ENCODE measurements at regions of chr1 and their contacts with region 1.

Region 1: GRCh38 chr1:20786253-20787028 is 666 bp downstream of the HP1BP3 start:
- DNase-seq: peak; percentile 89 to 98 (median 95)
- ATAC-seq: peak; percentile 73
- H3K4me3 ChIP-seq: peak overlapping the region; percentile 86 to 95
- H3K4me3 Mint-ChIP-seq: peak overlapping the region; percentile 99
- H3K27ac ChIP-seq: peak overlapping the region; percentile 81 to 88
- H3K27ac Mint-ChIP-seq: peak overlapping the region; percentile 98
- H3K4me1 ChIP-seq: peaks cover 32% of the 10 kb centered on the region
- H3K4me1 Mint-ChIP-seq: peaks cover 38% of the 10 kb centered on the region
- H3K27me3 ChIP-seq: no peaks in the 10 kb centered on the region
- H3K27me3 Mint-ChIP-seq: no peaks in the 10 kb centered on the region
- CTCF ChIP-seq: no peak

Region 2: DNA sequence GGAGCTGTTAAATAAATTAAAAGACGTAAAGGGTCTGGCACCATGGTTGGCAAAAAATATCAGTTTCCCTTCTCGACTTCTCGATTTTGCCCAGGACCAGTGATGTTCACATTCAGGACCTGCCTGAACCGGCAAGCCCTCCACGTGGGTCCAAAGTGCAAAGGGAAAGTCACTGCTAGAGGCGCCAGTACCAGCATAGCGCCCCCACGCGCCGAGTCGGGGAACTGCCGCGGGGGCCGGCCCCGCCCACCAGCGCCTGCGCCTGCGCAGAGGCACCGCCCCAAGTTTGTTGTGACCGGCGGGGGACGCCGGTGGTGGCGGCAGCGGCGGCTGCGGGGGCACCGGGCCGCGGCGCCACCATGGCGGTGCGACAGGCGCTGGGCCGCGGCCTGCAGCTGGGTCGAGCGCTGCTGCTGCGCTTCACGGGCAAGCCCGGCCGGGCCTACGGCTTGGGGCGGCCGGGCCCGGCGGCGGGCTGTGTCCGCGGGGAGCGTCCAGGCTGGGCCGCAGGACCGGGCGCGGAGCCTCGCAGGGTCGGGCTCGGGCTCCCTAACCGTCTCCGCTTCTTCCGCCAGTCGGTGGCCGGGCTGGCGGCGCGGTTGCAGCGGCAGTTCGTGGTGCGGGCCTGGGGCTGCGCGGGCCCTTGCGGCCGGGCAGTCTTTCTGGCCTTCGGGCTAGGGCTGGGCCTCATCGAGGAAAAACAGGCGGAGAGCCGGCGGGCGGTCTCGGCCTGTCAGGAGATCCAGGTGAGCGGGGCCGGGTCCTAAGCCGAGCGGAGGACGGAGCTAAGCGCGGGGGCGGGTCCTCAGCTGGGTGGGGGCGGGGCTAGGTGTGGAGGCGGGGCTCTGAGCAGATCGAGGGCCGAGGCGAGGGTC is 153.0 kb before region 1 on chr1 and contains the start of gene PINK1:
- CTCF ChIA-PET with region 1: no interaction called
- POLR2A ChIA-PET with region 1: no interaction called
- intact Hi-C with region 1: loop called (anchors 1 to 2 kb)
- DNase-seq: peak; percentile 74 to 94 (median 87)
- ATAC-seq: peak; percentile 90
- H3K4me3 ChIP-seq: peak within 1 kb of the TSS; percentile 59 to 62
- H3K4me3 Mint-ChIP-seq: peak within 1 kb of the TSS; percentile 87
- H3K27ac ChIP-seq: peak within 1 kb of the TSS; percentile 46 to 55
- H3K27ac Mint-ChIP-seq: peak within 1 kb of the TSS; percentile 85
- H3K4me1 ChIP-seq: peaks cover 8% of the 10 kb centered on the region
- H3K4me1 Mint-ChIP-seq: peaks cover 9% of the 10 kb centered on the region
- H3K27me3 ChIP-seq: no peaks in the 10 kb centered on the region
- H3K27me3 Mint-ChIP-seq: no peaks in the 10 kb centered on the region
- CTCF ChIP-seq: peak; percentile 98
- total RNA-seq, gene PINK1: 8.0 to 8.3 TPM

Region 3: GRCh38 chr1:20732588-20733360 is 53.7 kb before region 1 on chr1 and contains the start of gene SH2D5:
- CTCF ChIA-PET with region 1: no interaction called
- POLR2A ChIA-PET with region 1: interaction called, 3 read pairs
- intact Hi-C with region 1: loop called (anchors 1 kb)
- DNase-seq: peak; percentile 39 to 86 (median 64)
- ATAC-seq: peak; percentile 65
- H3K4me3 ChIP-seq: peak within 1 kb of the TSS; percentile 60 to 67
- H3K4me3 Mint-ChIP-seq: peak within 1 kb of the TSS; percentile 79
- H3K27ac ChIP-seq: peak within 1 kb of the TSS in 1 of 2 experiments; percentile 4
- H3K27ac Mint-ChIP-seq: no peak within 1 kb of the TSS
- H3K4me1 ChIP-seq: peaks cover 21% of the 10 kb centered on the region
- H3K4me1 Mint-ChIP-seq: peaks cover 23% of the 10 kb centered on the region
- H3K27me3 ChIP-seq: peaks cover 0 to 5% of the 10 kb centered on the region in 2 experiments
- H3K27me3 Mint-ChIP-seq: peaks cover 21% of the 10 kb centered on the region
- CTCF ChIP-seq: peak; percentile 62
- total RNA-seq, gene SH2D5: not detected

Region 4: GRCh38 chr1:20751462-20751990 is 34.9 kb before region 1 on chr1:
- CTCF ChIA-PET with region 1: no interaction called
- POLR2A ChIA-PET with region 1: no interaction called
- intact Hi-C with region 1: no loop called
- DNase-seq: no peak
- ATAC-seq: no peak
- H3K4me3 ChIP-seq: no peak overlapping the region
- H3K4me3 Mint-ChIP-seq: no peak overlapping the region
- H3K27ac ChIP-seq: no peak overlapping the region
- H3K27ac Mint-ChIP-seq: no peak overlapping the region
- H3K4me1 ChIP-seq: no peaks in the 10 kb centered on the region
- H3K4me1 Mint-ChIP-seq: no peaks in the 10 kb centered on the region
- H3K27me3 ChIP-seq: no peaks in the 10 kb centered on the region
- H3K27me3 Mint-ChIP-seq: no peaks in the 10 kb centered on the region
- CTCF ChIP-seq: no peak

Region 5: DNA sequence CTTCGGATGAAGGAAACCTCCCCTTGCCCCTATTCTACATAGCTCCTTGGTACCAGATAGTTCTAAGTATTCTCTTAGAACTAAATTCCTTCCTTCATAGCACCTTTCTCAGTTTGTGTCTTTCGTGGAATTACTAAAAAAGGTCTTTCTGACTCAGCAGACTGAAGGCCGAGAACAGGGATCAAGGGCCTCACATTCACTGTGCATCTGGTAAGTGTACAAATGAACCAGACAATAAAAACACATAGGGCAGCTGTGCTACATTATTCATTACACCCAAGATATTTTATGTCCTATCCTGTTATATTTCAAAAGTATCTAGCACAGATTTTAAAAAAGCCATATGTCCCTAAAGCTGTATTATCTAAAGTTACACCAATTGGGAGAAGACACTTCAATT is 63.6 kb after region 1 on chr1:
- CTCF ChIA-PET with region 1: no interaction called
- POLR2A ChIA-PET with region 1: no interaction called
- intact Hi-C with region 1: no loop called
- DNase-seq: no peak
- ATAC-seq: no peak
- H3K4me3 ChIP-seq: no peak overlapping the region
- H3K4me3 Mint-ChIP-seq: no peak overlapping the region
- H3K27ac ChIP-seq: no peak overlapping the region
- H3K27ac Mint-ChIP-seq: no peak overlapping the region
- H3K4me1 ChIP-seq: no peaks in the 10 kb centered on the region
- H3K4me1 Mint-ChIP-seq: no peaks in the 10 kb centered on the region
- H3K27me3 ChIP-seq: no peaks in the 10 kb centered on the region
- H3K27me3 Mint-ChIP-seq: no peaks in the 10 kb centered on the region
- CTCF ChIP-seq: no peak

Region 6: GRCh38 chr1:21439721-21440629 is 653.5 kb after region 1 on chr1 and contains the start of gene NBPF3:
- CTCF ChIA-PET with region 1: no interaction called
- POLR2A ChIA-PET with region 1: no interaction called
- intact Hi-C with region 1: loop called in 1 of 2 experiments (anchors 5 kb)
- DNase-seq: peak; percentile 67 to 91 (median 86)
- ATAC-seq: peak; percentile 98
- H3K4me3 ChIP-seq: peak within 1 kb of the TSS; percentile 66 to 85
- H3K4me3 Mint-ChIP-seq: peak within 1 kb of the TSS; percentile 95
- H3K27ac ChIP-seq: peak within 1 kb of the TSS in 1 of 2 experiments; percentile 64
- H3K27ac Mint-ChIP-seq: peak within 1 kb of the TSS; percentile 95
- H3K4me1 ChIP-seq: peaks cover 9% of the 10 kb centered on the region
- H3K4me1 Mint-ChIP-seq: peaks cover 21% of the 10 kb centered on the region
- H3K27me3 ChIP-seq: no peaks in the 10 kb centered on the region
- H3K27me3 Mint-ChIP-seq: peaks cover 5% of the 10 kb centered on the region
- CTCF ChIP-seq: no peak
- total RNA-seq, gene NBPF3: 8.0 to 8.3 TPM